Activated CD4-positive, alpha-beta T cell treated with anti-CD3 and anti-CD28 coated beads for 36 hours (primary cell): ENCODE measurements at regions of chr12 and their contacts with region 1.

Region 1: GRCh38 chr12:64890873-64891468 is 66.5 kb downstream of the TBC1D30 start:
- DNase-seq: no peak
- ATAC-seq: peak; percentile 42
- H3K4me3 Mint-ChIP-seq: no peak overlapping the region
- H3K27ac Mint-ChIP-seq: no peak overlapping the region
- H3K4me1 Mint-ChIP-seq: peaks cover 3% of the 10 kb centered on the region
- H3K27me3 Mint-ChIP-seq: peaks cover 14% of the 10 kb centered on the region

Region 2: GRCh38 chr12:64796208-64796845 is 94.6 kb before region 1 on chr12:
- CTCF ChIA-PET with region 1: interaction called, 7 read pairs
- POLR2A ChIA-PET with region 1: no interaction called
- intact Hi-C with region 1: loop called in 1 of 2 experiments (anchors 5 kb)
- DNase-seq: peak; percentile 75
- ATAC-seq: peak; percentile 91
- H3K4me3 Mint-ChIP-seq: no peak overlapping the region
- H3K27ac Mint-ChIP-seq: no peak overlapping the region
- H3K4me1 Mint-ChIP-seq: no peaks in the 10 kb centered on the region
- H3K27me3 Mint-ChIP-seq: peaks cover 14% of the 10 kb centered on the region

Region 3: GRCh38 chr12:64877363-64878004 is 13.5 kb before region 1 on chr12:
- CTCF ChIA-PET with region 1: interaction called, 13 read pairs
- POLR2A ChIA-PET with region 1: interaction called, 5 read pairs
- intact Hi-C with region 1: no loop called
- DNase-seq: peak; percentile 12
- ATAC-seq: peak; percentile 85
- H3K4me3 Mint-ChIP-seq: no peak overlapping the region
- H3K27ac Mint-ChIP-seq: peak overlapping the region; percentile 20
- H3K4me1 Mint-ChIP-seq: peaks cover 22% of the 10 kb centered on the region
- H3K27me3 Mint-ChIP-seq: peaks cover 6% of the 10 kb centered on the region

Region 4: DNA sequence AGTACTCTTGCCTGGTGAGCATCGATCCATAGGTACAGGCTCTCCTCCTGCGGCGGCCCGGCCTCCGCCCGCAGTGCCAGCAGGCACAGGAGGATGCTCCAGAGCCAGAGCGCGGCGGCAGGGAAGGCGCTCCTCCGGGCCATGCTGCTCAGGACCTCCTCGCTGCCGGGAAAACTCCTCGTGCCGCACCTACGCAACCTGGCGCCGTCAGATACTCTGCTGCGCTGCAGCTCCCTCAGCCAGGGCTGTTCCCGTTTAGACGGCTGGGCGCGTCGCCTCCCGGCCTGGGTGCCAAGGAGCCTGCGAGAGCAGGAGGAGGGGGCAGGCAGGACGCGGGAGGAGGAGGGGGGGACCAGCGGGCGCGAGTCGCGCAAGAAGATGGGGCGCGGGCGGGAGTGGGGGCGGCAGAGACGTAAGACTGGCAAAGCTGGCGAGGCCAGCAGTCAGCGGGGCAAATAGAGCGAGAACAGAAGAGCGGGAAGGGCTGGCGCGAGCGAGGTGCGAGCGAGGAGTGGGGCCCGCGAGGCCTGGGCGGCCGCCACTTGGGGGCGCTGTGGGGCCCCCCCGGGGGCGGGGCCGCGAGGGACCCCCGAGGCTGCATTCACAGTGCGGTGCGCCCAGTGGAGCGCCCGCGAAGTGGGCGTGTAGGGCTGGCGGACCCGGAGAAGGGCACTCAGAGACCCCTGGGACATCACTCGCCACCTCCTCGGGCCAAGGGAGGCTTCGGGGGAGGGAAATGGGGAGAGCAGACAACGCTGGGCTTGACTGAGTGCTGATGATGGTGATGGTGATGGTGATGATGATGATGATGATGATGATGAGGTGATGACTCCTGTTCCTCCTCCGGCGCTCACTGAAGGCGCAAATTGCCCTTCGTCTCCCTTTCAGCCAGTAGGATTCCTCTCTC is 230.3 kb after region 1 on chr12 and contains the start of gene WIF1:
- CTCF ChIA-PET with region 1: interaction called, 20 read pairs
- POLR2A ChIA-PET with region 1: no interaction called
- intact Hi-C with region 1: loop called (anchors 1 kb)
- DNase-seq: peak; percentile 56
- ATAC-seq: peak; percentile 82
- H3K4me3 Mint-ChIP-seq: peak within 1 kb of the TSS; percentile 32
- H3K27ac Mint-ChIP-seq: no peak within 1 kb of the TSS
- H3K4me1 Mint-ChIP-seq: peaks cover 6% of the 10 kb centered on the region
- H3K27me3 Mint-ChIP-seq: peaks cover 31% of the 10 kb centered on the region
- total RNA-seq, gene WIF1: not detected

Region 5: DNA sequence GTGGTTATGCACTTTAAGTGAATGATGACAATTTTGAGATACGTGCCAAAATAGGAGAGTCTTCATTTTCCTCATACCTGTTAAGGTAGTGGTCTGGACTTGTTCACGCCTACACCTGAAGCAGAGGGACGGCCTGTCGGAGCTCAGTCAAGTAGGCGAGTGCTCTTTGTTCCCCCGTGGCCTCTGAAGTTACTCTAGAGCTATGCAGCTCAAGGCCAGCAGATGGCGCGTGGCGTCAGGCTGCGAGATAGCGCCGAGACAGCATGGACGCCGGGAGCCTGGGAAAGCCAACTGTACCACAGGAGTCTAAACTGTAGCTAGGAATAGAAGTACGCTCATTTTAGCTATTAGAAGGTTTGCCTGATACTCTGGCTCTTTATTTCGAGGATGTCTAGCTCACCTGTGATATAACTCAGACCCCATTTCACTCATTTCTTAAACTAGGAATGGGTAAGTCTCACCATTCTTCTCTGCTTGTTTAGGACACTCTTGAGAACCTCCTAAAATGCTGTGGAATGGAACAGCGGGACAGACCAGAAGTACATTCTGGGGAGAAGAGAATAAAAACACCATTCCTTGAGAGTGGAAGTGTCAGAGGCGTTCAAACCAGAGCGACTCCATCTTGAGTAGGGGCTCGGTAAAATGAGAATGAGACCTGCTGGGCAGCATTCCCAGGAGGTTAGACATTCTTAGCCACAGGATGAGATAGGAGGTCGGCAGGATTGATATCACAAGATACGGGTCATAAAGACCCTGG is 665.9 kb after region 1 on chr12:
- CTCF ChIA-PET with region 1: interaction called, 4 read pairs
- POLR2A ChIA-PET with region 1: no interaction called
- intact Hi-C with region 1: loop called in 1 of 2 experiments (anchors 2 kb)
- DNase-seq: peak; percentile 82
- ATAC-seq: peak; percentile 93
- H3K4me3 Mint-ChIP-seq: no peak overlapping the region
- H3K27ac Mint-ChIP-seq: no peak overlapping the region
- H3K4me1 Mint-ChIP-seq: peaks cover 2% of the 10 kb centered on the region
- H3K27me3 Mint-ChIP-seq: peaks cover 15% of the 10 kb centered on the region

Region 6: GRCh38 chr12:65585648-65586602 is 695.0 kb after region 1 on chr12:
- CTCF ChIA-PET with region 1: no interaction called
- POLR2A ChIA-PET with region 1: no interaction called
- intact Hi-C with region 1: no loop called
- DNase-seq: no peak
- ATAC-seq: no peak
- H3K4me3 Mint-ChIP-seq: no peak overlapping the region
- H3K27ac Mint-ChIP-seq: no peak overlapping the region
- H3K4me1 Mint-ChIP-seq: no peaks in the 10 kb centered on the region
- H3K27me3 Mint-ChIP-seq: no peaks in the 10 kb centered on the region

Region 7: GRCh38 chr12:66087365-66087943 is 1196.5 kb after region 1 on chr12:
- CTCF ChIA-PET with region 1: interaction called, 6 read pairs
- POLR2A ChIA-PET with region 1: no interaction called
- intact Hi-C with region 1: loop called (anchors 5 kb)
- DNase-seq: peak; percentile 76
- ATAC-seq: peak; percentile 60
- H3K4me3 Mint-ChIP-seq: no peak overlapping the region
- H3K27ac Mint-ChIP-seq: no peak overlapping the region
- H3K4me1 Mint-ChIP-seq: no peaks in the 10 kb centered on the region
- H3K27me3 Mint-ChIP-seq: peaks cover 15% of the 10 kb centered on the region

Region 8: GRCh38 chr12:66693901-66694675 is 1803.1 kb after region 1 on chr12:
- CTCF ChIA-PET with region 1: no interaction called
- POLR2A ChIA-PET with region 1: no interaction called
- intact Hi-C with region 1: loop called in 1 of 2 experiments (anchors 5 kb)
- DNase-seq: peak; percentile 44
- ATAC-seq: peak; percentile 92
- H3K4me3 Mint-ChIP-seq: no peak overlapping the region
- H3K27ac Mint-ChIP-seq: no peak overlapping the region
- H3K4me1 Mint-ChIP-seq: peaks cover 17% of the 10 kb centered on the region
- H3K27me3 Mint-ChIP-seq: peaks cover 3% of the 10 kb centered on the region